ENCODE measurements at regions of chr3 and their contacts with region 1.

Region 1: DNA sequence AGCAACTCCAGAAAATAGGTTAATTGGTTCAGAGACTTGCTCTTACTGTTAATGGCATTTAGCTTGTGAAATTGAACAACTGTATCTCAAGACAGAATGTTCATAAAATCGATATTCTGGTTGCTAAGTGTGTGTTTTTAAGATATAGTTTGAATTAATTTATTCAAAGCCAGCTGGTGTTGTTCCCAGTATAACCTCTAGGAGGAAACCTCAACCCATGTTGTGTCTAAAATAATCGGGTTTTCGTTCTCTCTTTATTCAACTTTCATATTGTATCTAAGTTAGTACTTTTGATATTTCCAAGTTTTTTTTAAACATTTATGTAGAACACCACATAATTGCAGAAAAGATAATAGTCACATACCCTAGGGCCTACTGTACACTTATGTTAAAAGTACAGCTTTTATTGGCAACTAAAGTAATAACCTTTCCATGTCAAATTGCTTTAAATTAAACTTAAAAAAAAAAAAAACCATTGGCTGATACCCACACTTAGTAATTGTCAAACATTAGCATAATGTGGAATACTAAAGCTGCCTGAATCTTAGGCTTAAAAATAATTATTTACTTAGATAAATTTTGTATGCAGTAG is 90.9 kb downstream of the SAMMSON start:
- DNase-seq: peak; percentile 28 to 31
- ATAC-seq: peak in 1 of 2 experiments; percentile 46; a peak in 1 of 6 replicates
- H3K4me3 ChIP-seq: no peak overlapping the region
- H3K27ac ChIP-seq: no peak overlapping the region
- H3K4me1 ChIP-seq: no peaks in the 10 kb centered on the region
- CTCF ChIP-seq: peak; percentile 79
- EP300 ChIP-seq: no peak
- POLR2A ChIP-seq: no peak
- RAD21 ChIP-seq: peak; percentile 90 to 91

Region 2: DNA sequence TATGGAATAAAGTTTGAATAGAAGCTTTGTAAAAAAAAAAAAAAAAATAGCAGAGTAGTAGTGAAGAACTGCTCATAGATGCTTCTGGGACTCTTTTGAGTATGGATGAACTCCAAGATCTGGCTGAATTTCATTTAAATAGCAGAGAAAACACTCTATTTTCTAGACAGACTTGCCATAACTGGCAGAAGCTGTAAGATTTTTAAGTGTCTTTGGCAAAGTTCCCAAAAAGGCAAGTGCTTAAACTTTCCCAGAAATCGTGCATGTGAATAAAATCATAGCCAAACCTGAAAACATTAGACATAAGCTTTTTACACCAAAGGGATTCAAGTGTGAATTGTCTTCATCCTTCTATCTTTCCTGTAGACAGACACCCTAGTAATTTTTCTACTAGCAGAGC is 461.5 kb before region 1 on chr3:
- CTCF ChIA-PET with region 1: no interaction called
- POLR2A ChIA-PET with region 1: no interaction called
- DNase-seq: no peak
- ATAC-seq: no peak
- H3K4me3 ChIP-seq: no peak overlapping the region
- H3K27ac ChIP-seq: no peak overlapping the region
- H3K4me1 ChIP-seq: no peaks in the 10 kb centered on the region
- CTCF ChIP-seq: no peak
- EP300 ChIP-seq: no peak
- POLR2A ChIP-seq: no peak
- RAD21 ChIP-seq: no peak

Region 3: DNA sequence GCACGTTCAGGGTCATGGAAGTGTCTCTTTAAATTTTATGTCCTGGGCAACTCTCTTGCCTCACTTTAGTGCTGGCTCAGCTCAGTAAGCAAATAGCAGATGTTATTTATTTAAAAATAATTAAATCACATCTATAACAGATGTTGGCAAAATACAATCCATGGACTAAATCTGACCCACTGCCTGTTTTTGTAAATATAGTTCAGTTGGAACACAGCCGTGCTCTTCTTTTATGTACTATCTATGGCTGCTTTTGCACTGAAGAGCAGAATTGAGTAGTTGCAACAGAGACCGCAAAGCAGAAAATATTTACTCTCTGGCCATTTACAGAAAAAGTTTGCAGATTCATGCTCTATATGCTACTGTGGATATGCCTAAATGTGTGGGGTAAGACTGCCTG is 11.6 kb before region 1 on chr3:
- CTCF ChIA-PET with region 1: interaction called, 21 read pairs
- POLR2A ChIA-PET with region 1: no interaction called
- DNase-seq: no peak
- ATAC-seq: no peak
- H3K4me3 ChIP-seq: no peak overlapping the region
- H3K27ac ChIP-seq: no peak overlapping the region
- H3K4me1 ChIP-seq: no peaks in the 10 kb centered on the region
- CTCF ChIP-seq: no peak
- EP300 ChIP-seq: no peak
- POLR2A ChIP-seq: no peak
- RAD21 ChIP-seq: no peak